B cell (primary cell): ENCODE measurements at regions of chr12 and their contacts with region 1.

Region 1: GRCh38 chr12:3135522-3136461 is 58.6 kb downstream of the TSPAN9 start:
- DNase-seq: peak; percentile 75
- ATAC-seq: peak; percentile 75
- H3K4me3 ChIP-seq: no peak overlapping the region
- H3K4me3 Mint-ChIP-seq: no peak overlapping the region
- H3K27ac ChIP-seq: no peak overlapping the region
- H3K27ac Mint-ChIP-seq: no peak overlapping the region
- H3K4me1 ChIP-seq: no peaks in the 10 kb centered on the region
- H3K4me1 Mint-ChIP-seq: no peaks in the 10 kb centered on the region
- H3K27me3 ChIP-seq: peaks cover 0 to 15% (median 2%) of the 10 kb centered on the region in 4 experiments
- H3K27me3 Mint-ChIP-seq: peaks cover 45% of the 10 kb centered on the region
- CTCF ChIP-seq: peak; percentile 83

Region 2: DNA sequence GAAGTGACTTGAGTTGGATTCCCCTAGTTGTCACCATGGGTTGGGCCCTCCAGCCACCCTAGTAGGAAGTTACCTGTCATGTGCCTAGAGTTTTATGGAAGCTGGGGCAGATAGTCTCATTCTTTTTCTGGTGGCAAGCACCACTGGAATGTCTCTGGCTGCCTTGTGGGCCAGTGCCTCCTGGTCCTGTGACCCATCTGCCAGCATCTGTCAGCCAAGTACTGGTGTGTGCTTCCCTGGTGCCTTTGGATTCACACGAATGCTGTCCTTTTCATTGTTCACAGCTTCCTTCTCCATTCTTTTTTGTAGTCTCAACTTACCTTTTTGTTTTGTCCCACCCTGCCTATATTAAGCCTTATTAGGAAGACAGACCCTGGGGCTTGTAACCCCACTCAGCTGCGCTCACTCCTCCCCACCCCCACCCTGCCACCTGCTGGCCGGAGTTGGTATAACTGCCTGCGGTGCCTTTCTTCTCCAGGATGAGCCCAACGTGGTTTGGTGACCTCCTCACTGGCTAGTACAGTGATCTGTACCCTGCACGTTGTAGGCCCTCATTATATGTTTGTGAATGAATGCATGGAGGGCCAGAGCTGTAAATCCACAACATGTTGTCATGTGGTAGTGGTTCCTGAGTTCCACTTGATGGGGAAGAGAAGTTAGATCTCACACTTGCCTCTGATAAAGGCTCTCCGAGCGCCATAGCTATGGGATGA is 67.1 kb after region 1 on chr12:
- CTCF ChIA-PET with region 1: interaction called, 13 read pairs
- POLR2A ChIA-PET with region 1: no interaction called
- intact Hi-C with region 1: no loop called
- DNase-seq: peak; percentile 55
- ATAC-seq: no peak
- H3K4me3 ChIP-seq: no peak overlapping the region
- H3K4me3 Mint-ChIP-seq: no peak overlapping the region
- H3K27ac ChIP-seq: no peak overlapping the region
- H3K27ac Mint-ChIP-seq: no peak overlapping the region
- H3K4me1 ChIP-seq: peaks cover 15 to 36% of the 10 kb centered on the region in 2 donors
- H3K4me1 Mint-ChIP-seq: peaks cover 11% of the 10 kb centered on the region
- H3K27me3 ChIP-seq: peaks cover 0 to 44% (median 19%) of the 10 kb centered on the region in 4 experiments
- H3K27me3 Mint-ChIP-seq: peaks cover 47% of the 10 kb centered on the region
- CTCF ChIP-seq: peak; percentile 75

Region 3: DNA sequence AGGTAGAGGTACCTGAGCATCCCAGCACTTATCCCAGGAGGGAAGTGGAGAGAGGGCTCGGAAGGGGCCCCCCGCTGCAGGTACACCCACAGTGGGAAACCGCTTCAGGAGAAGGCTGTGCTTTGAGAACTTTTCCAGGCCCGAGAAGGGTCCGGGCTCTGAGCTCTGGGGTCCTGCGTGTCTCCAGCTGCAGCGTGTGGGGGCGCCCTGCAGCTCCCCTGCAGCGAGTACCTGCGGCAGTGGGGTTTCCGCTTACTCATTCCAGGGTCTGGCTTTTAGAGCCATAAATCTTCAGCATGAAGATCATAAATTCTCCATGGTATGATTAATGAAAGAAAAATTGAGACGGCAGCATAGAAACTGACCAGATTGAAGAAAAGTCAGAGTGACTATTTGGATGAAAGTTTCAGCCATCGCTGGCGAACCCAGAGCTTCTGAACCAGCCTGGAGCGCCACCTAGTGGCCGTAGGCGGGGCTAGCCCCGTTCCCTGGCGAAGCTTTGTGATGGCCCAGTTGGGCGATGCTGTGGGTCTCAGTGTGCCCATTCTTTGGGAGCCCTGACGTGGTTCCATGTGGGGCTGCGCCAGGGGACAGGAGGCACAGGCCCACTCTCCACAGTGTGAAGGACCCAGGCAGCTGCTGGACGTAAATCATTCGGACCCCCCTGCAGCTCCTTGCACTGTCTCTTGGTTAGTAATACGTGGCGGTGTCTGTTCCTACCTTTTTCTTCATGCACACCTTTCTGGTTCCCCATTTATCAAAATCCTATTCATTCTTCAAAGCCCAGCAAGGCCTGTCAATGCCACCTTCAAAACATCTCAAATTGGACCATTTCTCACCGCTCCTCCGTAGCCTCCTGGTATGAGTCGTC is 139.6 kb after region 1 on chr12:
- CTCF ChIA-PET with region 1: interaction called, 44 read pairs
- POLR2A ChIA-PET with region 1: no interaction called
- intact Hi-C with region 1: no loop called
- DNase-seq: peak; percentile 71
- ATAC-seq: peak; percentile 54
- H3K4me3 ChIP-seq: no peak overlapping the region
- H3K4me3 Mint-ChIP-seq: no peak overlapping the region
- H3K27ac ChIP-seq: no peak overlapping the region
- H3K27ac Mint-ChIP-seq: no peak overlapping the region
- H3K4me1 ChIP-seq: peaks cover 0 to 4% of the 10 kb centered on the region in 2 donors
- H3K4me1 Mint-ChIP-seq: no peaks in the 10 kb centered on the region
- H3K27me3 ChIP-seq: peaks cover 0 to 9% (median 0%) of the 10 kb centered on the region in 4 experiments
- H3K27me3 Mint-ChIP-seq: peaks cover 27% of the 10 kb centered on the region
- CTCF ChIP-seq: peak; percentile 90